ENCODE measurements at regions of chr2 and their contacts with region 1.

Region 1: DNA sequence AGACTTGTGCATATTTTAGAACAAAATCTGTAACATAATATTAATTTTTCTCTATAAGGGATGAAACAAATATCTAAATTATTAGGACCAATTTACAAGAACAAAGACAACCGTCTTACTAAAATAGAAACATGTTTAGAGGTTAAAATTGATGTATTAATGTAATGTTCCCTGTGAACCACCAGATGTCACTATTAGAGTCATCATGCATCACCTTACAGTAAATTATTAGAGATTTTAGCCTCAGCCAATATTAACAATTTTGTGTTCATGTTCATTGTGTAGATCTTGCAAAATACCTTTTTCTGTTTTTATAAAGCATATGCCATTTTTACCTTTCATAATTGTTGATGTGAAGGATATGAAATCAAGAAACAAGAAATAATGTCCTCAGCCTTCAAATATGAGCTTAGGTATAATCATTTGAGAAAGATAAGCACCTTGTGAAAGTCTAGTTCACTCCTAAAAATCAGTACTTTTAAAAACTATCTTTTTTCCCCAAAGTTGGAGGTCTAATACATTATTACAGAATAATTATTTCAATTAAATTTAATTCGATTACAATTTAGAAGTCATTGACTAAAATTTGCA is 344.3 kb upstream of the KCNH7 start:
- DNase-seq: no peak
- ATAC-seq: no peak
- H3K4me3 ChIP-seq: no peak overlapping the region
- H3K27ac ChIP-seq: no peak overlapping the region
- H3K4me1 ChIP-seq: no peaks in the 10 kb centered on the region
- H3K27me3 ChIP-seq: no peaks in the 10 kb centered on the region
- CTCF ChIP-seq: peak; percentile 28 to 46 (median 29); a peak in 2 of 6 replicates
- POLR2A ChIP-seq: no peak
- RAD21 ChIP-seq: peak; percentile 49

Region 2: GRCh38 chr2:163171786-163172531 is 10.9 kb before region 1 on chr2:
- CTCF ChIA-PET with region 1: interaction called, 25 read pairs
- POLR2A ChIA-PET with region 1: no interaction called
- RAD21 ChIA-PET with region 1: no interaction called
- intact Hi-C with region 1: no loop called
- DNase-seq: no peak
- ATAC-seq: no peak
- H3K4me3 ChIP-seq: no peak overlapping the region
- H3K27ac ChIP-seq: no peak overlapping the region
- H3K4me1 ChIP-seq: no peaks in the 10 kb centered on the region
- H3K27me3 ChIP-seq: peaks cover 25% of the 10 kb centered on the region
- CTCF ChIP-seq: no peak
- POLR2A ChIP-seq: no peak
- RAD21 ChIP-seq: no peak

Region 3: DNA sequence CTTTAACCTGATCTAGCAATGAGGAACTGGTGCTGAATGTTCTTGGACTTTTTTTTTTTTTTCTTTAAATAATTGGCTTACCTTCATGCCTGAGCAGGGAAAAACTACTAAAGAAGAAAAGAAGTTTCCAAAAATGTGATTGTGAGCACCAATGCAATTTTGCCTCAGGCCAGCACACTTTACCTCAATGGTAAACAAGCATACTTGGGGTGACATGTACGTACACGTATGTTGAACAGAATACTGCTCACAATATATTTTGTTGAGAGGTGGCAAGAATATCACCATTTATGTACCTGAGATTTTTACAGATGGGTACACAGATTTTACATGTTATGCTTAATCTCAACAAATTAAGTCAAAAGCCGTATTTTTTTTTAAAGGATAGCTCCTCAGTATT is 408.6 kb after region 1 on chr2:
- CTCF ChIA-PET with region 1: no interaction called
- POLR2A ChIA-PET with region 1: no interaction called
- RAD21 ChIA-PET with region 1: no interaction called
- intact Hi-C with region 1: no loop called
- DNase-seq: no peak
- ATAC-seq: no peak
- H3K4me3 ChIP-seq: no peak overlapping the region
- H3K27ac ChIP-seq: no peak overlapping the region
- H3K4me1 ChIP-seq: no peaks in the 10 kb centered on the region
- H3K27me3 ChIP-seq: peaks cover 53% of the 10 kb centered on the region
- CTCF ChIP-seq: no peak
- POLR2A ChIP-seq: no peak
- RAD21 ChIP-seq: no peak

Region 4: GRCh38 chr2:164430166-164430783 is 1247.4 kb after region 1 on chr2:
- CTCF ChIA-PET with region 1: interaction called, 12 read pairs
- POLR2A ChIA-PET with region 1: no interaction called
- RAD21 ChIA-PET with region 1: no interaction called
- intact Hi-C with region 1: no loop called
- DNase-seq: peak; percentile 23
- ATAC-seq: peak; percentile 81
- H3K4me3 ChIP-seq: no peak overlapping the region
- H3K27ac ChIP-seq: no peak overlapping the region
- H3K4me1 ChIP-seq: no peaks in the 10 kb centered on the region
- H3K27me3 ChIP-seq: peaks cover 38% of the 10 kb centered on the region
- CTCF ChIP-seq: peak; percentile 38 to 71 (median 70); a peak in 5 of 6 replicates
- POLR2A ChIP-seq: no peak
- RAD21 ChIP-seq: peak; percentile 61

Region 5: GRCh38 chr2:164479460-164479859 is 1296.6 kb after region 1 on chr2:
- CTCF ChIA-PET with region 1: interaction called, 29 read pairs
- POLR2A ChIA-PET with region 1: no interaction called
- RAD21 ChIA-PET with region 1: interaction called in 1 of 2 experiments, 3 read pairs
- intact Hi-C with region 1: loop called (anchors 2 kb)
- DNase-seq: peak; percentile 27
- ATAC-seq: no peak
- H3K4me3 ChIP-seq: no peak overlapping the region
- H3K27ac ChIP-seq: no peak overlapping the region
- H3K4me1 ChIP-seq: no peaks in the 10 kb centered on the region
- H3K27me3 ChIP-seq: peaks cover 23% of the 10 kb centered on the region
- CTCF ChIP-seq: peak; percentile 24 to 53 (median 26); a peak in 4 of 6 replicates
- POLR2A ChIP-seq: no peak
- RAD21 ChIP-seq: peak; percentile 60

Region 6: DNA sequence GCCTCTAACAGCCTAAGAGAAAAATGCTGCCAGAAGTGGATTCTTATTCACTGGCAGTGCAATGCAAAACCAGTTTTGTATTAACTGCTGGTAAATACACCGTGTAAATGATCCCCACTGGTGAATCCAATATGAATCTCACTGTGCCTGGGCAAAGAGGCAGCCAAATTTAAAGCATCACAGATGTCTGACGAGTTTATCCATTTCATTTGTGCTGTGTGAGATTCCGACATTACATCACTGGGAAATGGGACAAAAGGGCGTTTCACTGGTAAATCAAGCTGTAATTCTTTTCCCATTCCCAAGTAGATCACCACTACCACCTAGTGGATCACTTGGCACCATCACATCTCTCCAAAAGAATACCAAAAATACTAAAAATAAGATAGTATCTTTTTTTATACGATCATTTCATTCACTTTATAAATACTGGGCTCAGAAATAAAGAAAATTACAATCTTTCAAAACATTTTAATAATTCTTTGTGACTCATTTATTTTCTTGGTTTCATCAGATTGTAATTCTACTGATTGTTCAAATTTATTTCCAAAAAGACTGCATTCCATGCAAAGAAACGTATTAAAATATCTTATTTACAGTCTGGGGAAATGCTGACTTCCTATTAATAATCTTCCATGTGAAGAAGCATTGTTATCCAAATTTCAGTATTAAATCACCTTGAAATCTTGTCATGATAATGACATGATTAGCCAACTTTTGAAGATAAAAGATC is 1312.8 kb after region 1 on chr2:
- CTCF ChIA-PET with region 1: interaction called, 4 read pairs
- POLR2A ChIA-PET with region 1: no interaction called
- RAD21 ChIA-PET with region 1: no interaction called
- intact Hi-C with region 1: loop called (anchors 2 kb)
- DNase-seq: peak; percentile 23
- ATAC-seq: peak; percentile 67
- H3K4me3 ChIP-seq: no peak overlapping the region
- H3K27ac ChIP-seq: no peak overlapping the region
- H3K4me1 ChIP-seq: no peaks in the 10 kb centered on the region
- H3K27me3 ChIP-seq: no peaks in the 10 kb centered on the region
- CTCF ChIP-seq: peak; percentile 45 to 61 (median 60); a peak in 5 of 6 replicates
- POLR2A ChIP-seq: no peak
- RAD21 ChIP-seq: peak; percentile 61

Region 7: GRCh38 chr2:164538240-164538866 is 1355.5 kb after region 1 on chr2:
- CTCF ChIA-PET with region 1: interaction called, 10 read pairs
- POLR2A ChIA-PET with region 1: no interaction called
- RAD21 ChIA-PET with region 1: no interaction called
- intact Hi-C with region 1: no loop called
- DNase-seq: peak; percentile 7
- ATAC-seq: peak; percentile 91
- H3K4me3 ChIP-seq: no peak overlapping the region
- H3K27ac ChIP-seq: no peak overlapping the region
- H3K4me1 ChIP-seq: peaks cover 4 to 10% of the 10 kb centered on the region in 2 experiments; a peak in 1 of 4 replicates
- H3K27me3 ChIP-seq: no peaks in the 10 kb centered on the region
- CTCF ChIP-seq: peak; percentile 36 to 74 (median 71); a peak in 5 of 6 replicates
- POLR2A ChIP-seq: no peak
- RAD21 ChIP-seq: peak; percentile 77

Measured in HCT116 (cell line).